ENCODE measurements at regions of chr10 and their contacts with region 1.

Region 1: DNA sequence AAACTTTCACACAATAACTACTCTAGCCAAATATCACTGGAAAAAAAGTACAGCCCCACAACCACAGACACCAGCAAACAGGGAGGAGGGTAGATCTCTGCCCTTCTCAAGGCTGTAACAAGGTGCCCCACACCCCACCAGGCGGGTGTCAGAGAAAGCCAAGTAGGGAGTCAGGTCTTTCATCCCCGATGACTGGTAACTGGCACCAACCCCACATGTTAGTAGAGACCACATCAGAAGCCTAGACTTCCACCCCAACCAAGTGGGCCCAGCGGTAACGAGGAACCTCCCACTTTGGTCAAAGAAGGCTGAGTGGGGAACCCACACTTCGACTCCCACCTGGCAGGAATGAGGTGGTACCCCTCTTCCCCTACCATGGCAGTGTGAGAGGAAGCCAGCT is 16.4 kb upstream of the RUFY2 start:
- DNase-seq: no peak
- H3K4me3 ChIP-seq: no peak overlapping the region
- H3K27ac ChIP-seq: no peak overlapping the region
- H3K27me3 ChIP-seq: no peaks in the 10 kb centered on the region
- CTCF ChIP-seq: no peak

Region 2: DNA sequence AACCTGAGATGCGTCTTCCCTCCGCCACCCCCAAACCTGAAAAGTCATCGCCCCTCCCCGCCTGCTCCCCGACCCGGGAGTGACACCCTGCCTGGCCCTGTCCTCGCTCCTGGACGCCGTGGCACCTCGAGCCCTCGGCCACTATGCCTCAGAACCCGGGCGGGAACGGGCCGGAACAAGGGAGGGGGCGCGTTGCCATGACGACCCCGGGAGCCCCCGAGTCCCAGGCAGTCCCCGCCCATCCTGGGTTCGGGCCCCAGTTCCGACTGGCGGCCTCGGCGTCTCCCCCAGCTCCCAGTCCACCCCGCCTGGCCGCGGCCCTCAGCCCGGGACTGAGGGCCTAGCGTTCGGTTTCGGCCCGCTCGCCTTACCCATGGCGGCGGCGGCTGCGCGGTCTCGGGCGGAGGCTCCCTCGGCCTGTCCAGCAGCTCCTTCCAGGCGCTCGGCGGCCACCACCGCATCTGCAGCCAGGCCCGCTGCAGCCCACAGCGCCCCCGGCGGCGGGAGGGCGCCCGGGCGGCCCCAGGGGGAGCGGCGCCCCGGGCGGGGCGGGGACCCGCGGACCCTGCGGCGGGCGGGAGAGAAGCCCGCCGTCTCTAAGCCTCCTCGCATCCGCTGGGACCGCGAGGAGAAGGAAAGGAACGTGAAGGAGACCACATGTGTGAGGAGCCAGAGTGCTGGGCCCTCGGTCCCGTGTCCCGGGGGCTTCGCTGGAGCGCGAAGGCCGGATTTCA is 16.5 kb before region 1 on chr10 and contains the start of gene RUFY2:
- CTCF ChIA-PET with region 1: interaction called, 11 read pairs
- POLR2A ChIA-PET with region 1: no interaction called
- DNase-seq: peak; percentile 15
- H3K4me3 ChIP-seq: peak within 1 kb of the TSS; percentile 98
- H3K27ac ChIP-seq: peak within 1 kb of the TSS; percentile 89
- H3K27me3 ChIP-seq: no peaks in the 10 kb centered on the region
- CTCF ChIP-seq: peak; percentile 18
- polyA plus RNA-seq, gene RUFY2: 10.7 and 14.7 TPM in 2 replicates

Measured in AG04450 (cell line).